Lower leg skin (tissue), 4 donors: ENCODE measurements at regions of chr4 and their contacts with region 1.

Region 1: GRCh38 chr4:24419181-24420034 is 164.9 kb downstream of the DHX15 start:
- DNase-seq: peak; percentile 58 to 93
- H3K4me3 ChIP-seq: no peak overlapping the region
- CTCF ChIP-seq: peak in 1 of 3 donors; percentile 55
- POLR2A ChIP-seq: no peak

Region 2: DNA sequence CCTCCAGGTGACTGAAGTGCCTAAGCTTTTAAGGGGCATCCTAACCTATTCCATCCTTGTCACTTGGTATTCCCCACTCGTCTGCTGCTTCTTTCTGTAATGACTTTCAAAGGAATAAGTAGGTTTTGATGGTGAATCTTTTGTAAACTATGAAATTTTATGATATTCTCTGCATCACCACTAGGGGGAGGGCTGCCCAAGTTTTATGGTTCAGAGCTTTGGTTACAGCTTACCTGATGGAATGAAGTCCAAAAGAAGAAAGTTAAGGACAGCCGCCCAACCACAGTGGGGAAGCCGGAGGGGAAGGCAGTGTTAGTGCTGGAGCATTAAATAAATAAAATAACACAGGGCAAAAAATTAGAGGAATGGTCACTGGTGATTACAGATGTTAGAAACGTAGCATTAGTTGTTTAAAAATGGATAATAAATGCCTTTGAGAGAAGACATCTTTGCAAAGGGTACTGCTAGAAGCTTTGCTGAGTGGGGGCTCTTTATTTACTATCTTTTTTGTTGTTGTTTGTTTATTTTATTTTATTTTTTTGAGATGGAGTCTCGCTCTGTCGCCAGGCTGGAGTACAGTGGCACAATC is 1521.8 kb before region 1 on chr4:
- intact Hi-C with region 1: loop called (anchors 10 kb)
- DNase-seq: no peak
- H3K4me3 ChIP-seq: no peak overlapping the region
- CTCF ChIP-seq: no peak
- POLR2A ChIP-seq: no peak

Region 3: DNA sequence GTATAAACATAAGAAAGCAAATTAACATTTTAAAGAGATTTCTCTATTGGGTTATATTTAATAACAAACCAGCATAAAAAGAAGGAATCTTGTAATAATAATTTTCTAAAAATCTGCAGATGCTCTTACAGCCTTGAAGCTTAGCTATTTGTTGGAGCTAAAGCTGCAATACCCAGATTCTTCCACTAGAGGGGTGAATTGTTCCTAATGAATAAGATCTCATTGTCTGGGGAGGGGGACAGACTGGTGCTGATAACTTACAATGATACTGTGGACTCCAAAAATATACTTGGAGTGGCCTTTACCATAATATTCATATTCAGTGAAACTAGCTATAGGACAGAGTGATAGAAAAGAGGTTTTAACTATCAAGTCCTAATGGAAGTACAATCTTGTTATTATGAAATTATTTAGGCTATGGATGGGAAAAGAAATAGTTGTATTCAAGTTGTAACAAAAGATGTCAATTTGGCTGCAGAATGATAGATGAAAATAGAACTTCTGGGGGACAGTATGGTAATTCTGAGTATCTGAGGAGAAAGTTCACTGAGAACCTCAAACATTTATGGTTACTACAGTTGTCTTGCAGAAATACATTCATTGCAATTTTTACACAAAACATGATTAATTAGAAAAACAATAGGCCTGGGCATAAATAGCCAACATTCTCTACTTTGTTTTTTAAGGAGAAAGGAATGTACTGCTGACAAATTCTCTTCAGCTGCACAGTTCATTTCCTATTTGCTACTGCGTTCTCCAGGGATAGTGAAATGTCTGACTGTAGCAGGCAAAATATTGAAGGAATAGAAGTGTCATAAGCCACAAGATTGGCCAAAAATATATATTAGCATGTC is 1283.4 kb before region 1 on chr4:
- intact Hi-C with region 1: loop called (anchors 5 kb)
- DNase-seq: peak in 1 of 2 donors; percentile 18
- H3K4me3 ChIP-seq: no peak overlapping the region
- CTCF ChIP-seq: no peak
- POLR2A ChIP-seq: no peak

Region 4: GRCh38 chr4:24443200-24443599 is 23.8 kb after region 1 on chr4:
- intact Hi-C with region 1: no loop called
- DNase-seq: no peak
- H3K4me3 ChIP-seq: no peak overlapping the region
- CTCF ChIP-seq: no peak
- POLR2A ChIP-seq: no peak

Region 5: DNA sequence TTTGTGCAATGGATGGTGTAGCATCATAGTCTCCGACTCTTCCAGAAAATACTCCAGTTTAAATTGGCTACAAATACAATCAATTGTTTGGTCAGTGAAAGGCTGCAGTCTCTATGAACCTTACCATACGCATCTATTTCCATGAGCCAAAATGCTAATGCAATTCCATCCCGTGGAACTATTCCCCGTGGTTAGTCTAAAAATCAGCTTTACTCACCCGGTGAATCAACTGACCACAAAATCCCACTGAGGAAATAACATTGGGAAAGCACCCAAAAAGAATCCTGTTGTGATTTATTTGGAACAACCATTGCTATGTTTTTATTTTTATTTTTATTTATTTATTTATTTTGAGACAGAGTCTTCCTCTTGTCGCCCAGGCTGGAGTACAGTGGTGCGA is 77.8 kb after region 1 on chr4:
- intact Hi-C with region 1: no loop called
- DNase-seq: no peak
- H3K4me3 ChIP-seq: no peak overlapping the region
- CTCF ChIP-seq: no peak
- POLR2A ChIP-seq: no peak

Region 6: DNA sequence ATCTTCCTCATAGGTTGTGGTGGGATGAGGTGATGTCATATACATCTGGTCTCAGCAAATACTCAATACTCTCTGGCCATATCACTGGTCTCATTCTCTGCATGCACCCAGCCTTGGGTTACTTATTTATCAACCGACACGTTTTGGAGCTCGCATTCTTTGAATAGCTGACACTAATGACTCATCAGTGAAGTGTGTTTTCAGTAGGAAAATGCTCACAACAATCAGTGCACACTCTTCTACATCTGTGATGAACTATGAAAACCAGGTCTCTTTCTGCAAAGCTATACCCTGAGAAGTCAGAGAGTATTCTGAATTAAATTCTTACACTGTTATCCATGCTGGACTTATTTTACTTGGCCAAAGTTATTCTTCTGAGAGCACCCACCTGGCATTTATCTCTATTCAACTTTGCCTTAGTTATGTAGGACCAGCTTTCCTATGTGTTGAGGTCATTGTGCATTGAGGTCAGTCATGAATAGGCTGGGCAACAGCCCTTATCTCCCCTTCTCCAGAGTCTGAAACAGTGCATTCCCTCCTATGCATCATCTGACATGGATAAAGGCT is 223.7 kb after region 1 on chr4:
- intact Hi-C with region 1: no loop called
- DNase-seq: no peak
- H3K4me3 ChIP-seq: no peak overlapping the region
- CTCF ChIP-seq: no peak
- POLR2A ChIP-seq: no peak